Right ventricle myocardium superior (tissue), 1 donor: ENCODE measurements at regions of chr15 and their contacts with region 1.

Region 1: DNA sequence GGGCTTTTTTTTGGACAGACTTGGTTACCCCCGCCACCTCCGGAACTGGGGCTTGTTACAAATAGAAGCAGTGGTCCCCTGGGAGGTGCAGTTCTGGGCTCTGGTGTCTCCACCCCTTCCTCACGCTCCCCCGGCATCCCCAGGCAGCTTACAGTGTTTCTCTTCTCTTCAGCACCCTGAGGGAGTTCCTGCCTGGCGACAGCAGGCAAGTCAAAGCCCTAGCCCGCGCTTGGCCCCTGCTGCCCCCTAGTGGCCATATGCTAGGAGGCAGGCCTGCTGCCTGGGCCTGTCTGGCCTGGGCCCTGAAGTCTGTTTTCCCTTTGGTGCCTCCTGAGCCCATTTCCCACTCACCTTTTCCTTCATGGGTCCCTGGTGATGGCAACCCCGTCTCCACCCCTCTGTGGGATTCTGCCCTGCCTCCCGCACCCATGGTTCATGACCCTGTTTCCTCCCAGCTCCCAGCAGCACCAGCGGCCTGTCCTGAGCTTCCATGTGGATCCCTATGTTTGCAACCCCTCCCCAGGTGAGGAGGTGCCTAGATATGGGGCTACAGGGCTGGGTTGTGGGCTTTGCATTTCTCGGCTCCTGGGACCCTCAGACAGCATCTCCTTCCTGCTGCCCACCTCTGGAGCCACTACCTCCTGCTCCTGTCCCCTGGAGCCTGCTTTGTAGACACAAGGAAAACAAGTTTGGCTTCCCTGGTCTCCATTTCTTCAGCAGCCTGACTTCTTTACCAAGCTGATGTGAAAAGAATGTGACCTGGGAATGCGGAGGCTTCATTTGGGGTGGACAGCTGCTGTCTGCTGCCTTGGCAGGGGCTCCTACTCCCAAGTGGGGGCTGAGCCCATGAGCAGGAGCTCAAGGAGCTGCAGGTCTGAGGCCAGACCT is 2.2 kb downstream of the SNX22 start:
- DNase-seq: peak; percentile 94
- ATAC-seq: peak; percentile 82

Region 2: DNA sequence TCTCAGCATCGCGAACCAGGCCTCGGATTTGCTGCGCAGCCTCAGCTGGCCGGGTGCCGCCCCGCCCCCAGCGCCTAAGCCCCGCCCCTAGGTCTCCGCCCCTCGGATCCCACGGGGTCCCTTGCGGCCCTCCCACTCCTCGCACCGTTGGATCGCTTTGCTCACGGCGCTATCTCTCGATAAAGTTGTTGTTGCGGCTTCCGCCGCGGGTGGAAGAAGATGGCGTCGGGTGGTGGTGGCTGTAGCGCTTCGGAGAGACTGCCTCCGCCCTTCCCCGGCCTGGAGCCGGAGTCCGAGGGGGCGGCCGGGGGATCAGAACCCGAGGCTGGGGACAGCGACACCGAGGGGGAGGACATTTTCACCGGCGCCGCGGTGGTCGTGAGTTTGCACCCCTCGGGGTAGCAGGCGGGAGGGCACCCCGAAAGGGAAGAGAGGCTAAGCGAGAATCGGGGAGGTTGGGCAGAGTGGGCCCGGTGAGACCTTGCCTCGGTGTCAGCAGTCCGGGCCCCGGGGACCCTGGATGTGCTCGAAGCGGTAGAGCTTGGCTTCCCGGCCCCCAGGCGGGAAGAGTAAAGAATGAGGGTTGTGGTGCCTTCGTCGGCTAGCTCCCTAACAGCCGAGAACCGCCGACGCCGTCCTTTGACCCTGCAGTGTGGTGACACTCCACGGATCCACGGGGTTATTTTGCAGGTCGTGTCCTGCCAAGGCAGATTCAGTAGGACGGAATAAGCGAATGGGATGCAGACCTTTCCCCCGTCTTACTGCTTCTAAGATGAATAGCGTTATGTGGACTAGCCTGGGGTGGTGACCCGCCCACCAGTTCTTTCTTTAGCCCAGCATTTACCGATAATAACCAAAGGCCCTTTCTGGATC is 57.7 kb before region 1 on chr15 and contains the start of gene SNX1:
- intact Hi-C with region 1: loop called (anchors 5 kb)
- DNase-seq: peak; percentile 96
- ATAC-seq: peak; percentile 82
- total RNA-seq, gene SNX1: 86.3 TPM